ENCODE measurements at regions of chr11 and their contacts with region 1.

Region 1: GRCh38 chr11:36478700-36479329 is 31.3 kb downstream of the TRAF6 start:
- DNase-seq: no peak
- ATAC-seq: peak; percentile 60
- H3K4me3 Mint-ChIP-seq: no peak overlapping the region
- H3K27ac Mint-ChIP-seq: no peak overlapping the region
- H3K4me1 Mint-ChIP-seq: no peaks in the 10 kb centered on the region
- H3K27me3 Mint-ChIP-seq: peaks cover 9% of the 10 kb centered on the region; the same call in 1 of the 2 replicates
- CTCF ChIP-seq: no peak

Region 2: GRCh38 chr11:36278531-36279282 is 200.1 kb before region 1 on chr11:
- CTCF ChIA-PET with region 1: interaction called, 20 read pairs
- POLR2A ChIA-PET with region 1: no interaction called
- DNase-seq: no peak
- ATAC-seq: peak; percentile 91
- H3K4me3 Mint-ChIP-seq: no peak overlapping the region
- H3K27ac Mint-ChIP-seq: no peak overlapping the region
- H3K4me1 Mint-ChIP-seq: no peaks in the 10 kb centered on the region
- H3K27me3 Mint-ChIP-seq: no peaks in the 10 kb centered on the region; the same call in 1 of the 2 replicates
- CTCF ChIP-seq: no peak

Region 3: DNA sequence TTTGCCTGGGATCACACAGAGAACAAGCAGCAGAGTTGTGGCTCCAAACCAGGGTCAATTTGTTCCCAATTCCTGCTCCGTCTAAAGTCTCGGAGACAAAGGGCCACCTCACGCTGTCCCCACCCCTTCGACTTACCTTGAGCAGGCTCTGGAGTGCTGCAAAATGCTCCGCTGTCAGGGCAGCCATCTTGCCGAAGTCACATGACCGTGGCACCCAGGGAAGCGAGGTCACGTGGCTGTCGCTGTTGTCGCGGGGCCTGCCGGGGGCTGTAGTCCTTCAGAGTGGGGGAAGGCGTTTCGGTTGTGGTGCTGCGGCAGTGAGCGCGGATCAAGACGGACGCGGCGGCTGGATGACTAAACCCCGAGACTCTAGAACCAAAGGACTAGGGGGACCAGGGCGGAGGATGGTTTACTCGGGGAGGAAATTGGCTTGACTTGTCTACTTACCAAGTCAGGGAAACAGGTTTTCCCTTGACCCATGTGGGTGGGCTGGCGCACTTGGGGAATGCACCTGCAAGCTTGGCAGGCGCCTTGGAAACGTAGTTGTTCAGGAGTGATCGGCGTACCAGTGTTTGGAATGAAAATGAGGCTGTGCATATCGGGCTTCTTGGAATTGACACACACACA is 189.5 kb before region 1 on chr11 and contains the start of gene COMMD9:
- CTCF ChIA-PET with region 1: interaction called, 114 read pairs
- POLR2A ChIA-PET with region 1: no interaction called
- DNase-seq: peak; percentile 96
- ATAC-seq: peak; percentile 94
- H3K4me3 Mint-ChIP-seq: peak within 1 kb of the TSS; percentile 92
- H3K27ac Mint-ChIP-seq: peak within 1 kb of the TSS; percentile 80
- H3K4me1 Mint-ChIP-seq: peaks cover 5% of the 10 kb centered on the region
- H3K27me3 Mint-ChIP-seq: peaks cover 24% of the 10 kb centered on the region
- CTCF ChIP-seq: no peak
- total RNA-seq, gene COMMD9: 26.1 to 33.3 TPM (median 27.1 TPM) in 3 replicates

Region 4: GRCh38 chr11:36411202-36411640 is 67.6 kb before region 1 on chr11:
- CTCF ChIA-PET with region 1: no interaction called
- POLR2A ChIA-PET with region 1: no interaction called
- DNase-seq: no peak
- ATAC-seq: no peak
- H3K4me3 Mint-ChIP-seq: no peak overlapping the region
- H3K27ac Mint-ChIP-seq: no peak overlapping the region
- H3K4me1 Mint-ChIP-seq: peaks cover 8% of the 10 kb centered on the region
- H3K27me3 Mint-ChIP-seq: no peaks in the 10 kb centered on the region; the same call in 1 of the 2 replicates
- CTCF ChIP-seq: no peak

Region 5: GRCh38 chr11:36724742-36725385 is 246.0 kb after region 1 on chr11:
- CTCF ChIA-PET with region 1: no interaction called
- POLR2A ChIA-PET with region 1: no interaction called
- DNase-seq: no peak
- ATAC-seq: no peak
- H3K4me3 Mint-ChIP-seq: no peak overlapping the region
- H3K27ac Mint-ChIP-seq: no peak overlapping the region
- H3K4me1 Mint-ChIP-seq: no peaks in the 10 kb centered on the region
- H3K27me3 Mint-ChIP-seq: peaks cover 14% of the 10 kb centered on the region
- CTCF ChIP-seq: no peak

Measured in WTC11 (cell line).